ENCODE measurements at regions of chr20 and their contacts with region 1.

Region 1: DNA sequence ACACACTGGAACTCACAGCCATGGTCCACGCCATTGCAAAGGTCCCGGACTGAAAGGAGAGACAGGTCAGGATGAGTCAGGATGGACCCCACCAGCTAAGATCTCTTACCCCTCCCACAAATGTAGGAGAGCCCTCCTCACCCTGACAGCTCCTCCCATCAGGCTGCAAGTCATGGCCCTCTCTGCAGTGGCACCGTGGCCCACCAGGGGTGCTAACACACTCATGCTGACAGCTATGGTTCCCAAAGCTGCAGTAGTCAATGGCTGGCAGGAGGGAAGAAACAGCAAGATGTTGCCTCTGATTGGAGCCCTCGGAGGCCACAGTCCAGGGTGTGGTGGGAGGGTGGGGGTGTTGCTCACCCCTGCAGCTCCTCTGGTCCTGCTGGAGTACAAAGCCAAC is 5.7 kb upstream of the RBPJL start:
- DNase-seq: no peak
- ATAC-seq: peak; percentile 56

Region 2: DNA sequence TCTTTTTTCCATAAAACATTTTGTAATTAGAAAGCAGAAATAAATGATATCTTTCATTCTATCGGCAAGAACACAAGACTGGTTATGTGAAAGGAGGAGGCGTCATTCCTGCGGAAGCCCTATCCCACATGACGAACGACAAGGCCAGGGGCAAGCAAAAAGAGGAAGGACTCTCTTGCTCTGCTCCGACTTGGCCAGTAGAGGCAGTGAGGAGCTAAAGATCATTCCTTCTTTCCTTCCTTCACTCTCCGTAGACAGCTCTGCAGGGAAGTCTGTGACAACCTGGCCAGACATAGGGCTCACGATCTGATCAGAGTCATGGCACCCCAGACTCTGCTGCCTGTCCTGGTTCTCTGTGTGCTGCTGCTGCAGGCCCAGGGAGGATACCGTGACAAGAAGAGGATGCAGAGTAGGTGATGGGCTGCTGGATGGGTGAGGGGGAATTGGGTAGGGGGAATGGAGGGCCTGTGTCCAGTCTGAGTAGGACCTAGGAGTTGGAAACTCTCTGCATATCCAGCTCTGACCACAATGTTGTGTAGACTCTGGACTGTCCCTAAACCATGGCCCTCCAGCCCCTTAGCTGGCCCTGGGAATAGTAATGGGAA is 328.6 kb after region 1 on chr20 and contains the start of gene WFDC10A:
- intact Hi-C with region 1: no loop called
- DNase-seq: peak; percentile 39 to 48
- ATAC-seq: peak; percentile 98
- total RNA-seq, gene WFDC10A: not detected

Region 3: DNA sequence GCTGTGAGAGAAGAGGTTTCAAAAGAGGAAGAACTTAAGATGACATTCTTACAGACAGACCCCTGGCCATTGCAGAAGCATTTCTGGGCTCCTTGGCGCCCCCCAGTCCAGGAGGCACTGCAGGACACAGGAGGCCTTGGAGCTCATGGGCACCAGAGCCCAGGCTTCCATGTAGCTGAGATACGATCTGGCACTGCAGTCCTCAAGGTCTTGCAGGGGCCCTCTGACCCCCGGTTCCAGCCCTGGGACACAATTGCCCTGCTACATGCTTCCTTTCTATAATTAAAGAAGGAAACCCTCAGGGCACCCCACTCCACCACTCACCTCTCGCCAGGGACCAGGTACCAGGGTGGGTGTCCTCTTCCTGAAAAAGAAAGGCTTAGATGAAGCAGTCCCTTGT is 457.1 kb after region 1 on chr20:
- intact Hi-C with region 1: loop called in 1 of 2 experiments (anchors 5 kb)
- DNase-seq: no peak
- ATAC-seq: no peak